Caco-2 (cell line): ENCODE measurements at regions of chr3 and their contacts with region 1.

Region 1: DNA sequence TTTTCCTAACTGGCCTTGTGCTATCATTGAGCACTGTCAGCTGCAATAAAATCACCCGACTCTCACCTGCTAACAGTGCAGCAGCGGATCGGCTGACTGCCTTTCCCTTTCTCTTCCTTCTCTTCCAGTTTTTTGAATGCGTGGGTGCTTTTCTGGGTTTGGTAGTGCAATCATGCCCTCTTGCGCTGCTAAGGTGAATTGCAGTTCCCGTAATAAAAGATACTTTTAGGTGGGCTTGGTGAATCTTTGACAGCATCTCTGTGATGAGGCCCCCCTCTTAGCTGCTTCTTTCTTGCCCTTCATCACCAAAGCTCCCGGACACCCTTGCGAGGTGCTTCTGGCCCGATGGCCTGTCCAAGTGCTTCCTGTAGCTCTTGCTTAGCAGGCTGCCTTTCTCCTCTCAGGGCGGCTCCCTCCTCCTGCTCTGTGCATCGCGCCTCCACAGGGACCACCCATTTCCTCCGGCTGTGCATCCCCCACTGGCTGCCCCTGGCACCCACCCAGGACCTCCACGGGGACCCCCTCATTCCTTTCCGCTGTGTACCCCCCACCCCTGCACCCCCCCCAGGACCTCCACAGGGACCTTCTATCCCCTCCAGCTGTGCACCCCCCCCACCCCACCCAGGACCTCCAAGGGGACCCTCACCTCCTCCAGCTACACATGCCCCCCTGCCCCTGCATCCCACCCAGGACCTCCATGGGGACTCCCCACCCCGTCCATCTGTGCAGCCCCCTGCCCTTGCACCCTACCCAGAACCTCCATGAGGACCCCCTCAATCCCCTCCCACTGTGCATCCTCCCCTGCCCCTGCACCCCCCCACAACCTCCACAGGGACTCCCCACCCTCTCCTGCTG is 50.8 kb upstream of the RPL32 start:
- DNase-seq: peak in 1 of 2 experiments; percentile 55
- H3K4me3 ChIP-seq: no peak overlapping the region
- H3K4me3 Mint-ChIP-seq: no peak overlapping the region
- H3K27ac Mint-ChIP-seq: no peak overlapping the region
- H3K4me1 ChIP-seq: peaks cover 14% of the 10 kb centered on the region
- H3K4me1 Mint-ChIP-seq: peaks cover 23% of the 10 kb centered on the region
- H3K27me3 ChIP-seq: no peaks in the 10 kb centered on the region
- H3K27me3 Mint-ChIP-seq: peaks cover 7% of the 10 kb centered on the region
- CTCF ChIP-seq: peak; percentile 82 to 85

Region 2: DNA sequence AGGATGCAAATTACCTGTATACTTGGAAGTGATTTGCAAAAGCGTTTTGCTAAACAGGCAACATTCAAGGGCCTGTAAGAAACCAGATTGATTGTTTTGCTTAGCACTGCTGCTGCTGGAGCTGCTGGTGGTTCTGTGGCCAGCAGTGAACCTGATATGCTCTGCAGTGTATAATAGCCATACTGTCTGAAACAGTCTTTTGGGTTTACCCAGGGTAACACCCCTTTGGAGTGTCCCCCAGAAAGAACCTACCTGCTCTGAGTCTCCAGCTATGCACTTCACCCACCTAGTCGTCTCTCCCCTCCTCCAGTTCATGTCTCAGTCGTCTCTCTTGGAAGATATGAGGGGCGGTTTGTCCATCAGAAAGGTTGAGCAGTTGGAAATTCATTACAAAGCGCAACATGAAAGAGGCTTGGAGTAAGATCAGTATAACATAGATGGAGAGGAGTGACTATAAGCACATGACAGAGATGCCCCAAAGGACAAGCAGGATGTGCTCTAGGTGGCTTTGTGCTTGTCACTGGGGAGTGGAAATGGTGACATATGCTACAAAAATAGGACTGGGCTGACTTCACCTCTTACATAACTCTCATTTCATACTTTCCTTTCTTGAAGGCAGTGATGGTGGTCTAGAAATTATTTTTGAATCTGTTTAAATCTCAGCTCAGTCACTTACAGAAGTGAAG is 331.6 kb before region 1 on chr3:
- CTCF ChIA-PET with region 1: no interaction called
- POLR2A ChIA-PET with region 1: no interaction called
- intact Hi-C with region 1: loop called (anchors 5 kb)
- DNase-seq: no peak
- H3K4me3 ChIP-seq: no peak overlapping the region
- H3K4me3 Mint-ChIP-seq: no peak overlapping the region
- H3K27ac Mint-ChIP-seq: no peak overlapping the region
- H3K4me1 ChIP-seq: peaks cover 24% of the 10 kb centered on the region
- H3K4me1 Mint-ChIP-seq: peaks cover 26% of the 10 kb centered on the region
- H3K27me3 ChIP-seq: no peaks in the 10 kb centered on the region
- H3K27me3 Mint-ChIP-seq: no peaks in the 10 kb centered on the region
- CTCF ChIP-seq: no peak

Region 3: DNA sequence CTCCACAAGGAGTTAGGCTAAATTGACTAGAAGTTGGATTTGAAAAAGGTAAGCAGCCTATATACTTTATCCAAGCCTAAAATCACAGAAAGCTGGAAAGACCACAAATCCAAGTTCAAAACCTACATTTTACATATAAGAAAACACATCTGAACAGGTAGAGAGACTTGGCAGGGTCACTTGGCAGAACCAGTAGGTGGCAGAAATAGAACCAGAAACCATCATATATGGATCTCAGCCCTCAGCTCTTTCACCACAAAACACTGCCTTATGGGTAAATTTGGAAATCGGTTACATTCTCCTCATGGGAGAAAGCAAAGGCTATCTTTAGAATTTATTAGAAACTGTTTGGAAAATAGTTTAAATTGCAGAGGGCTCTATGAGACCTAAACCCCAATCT is 291.1 kb before region 1 on chr3:
- CTCF ChIA-PET with region 1: no interaction called
- POLR2A ChIA-PET with region 1: no interaction called
- intact Hi-C with region 1: loop called (anchors 2 kb)
- DNase-seq: no peak
- H3K4me3 ChIP-seq: no peak overlapping the region
- H3K4me3 Mint-ChIP-seq: no peak overlapping the region
- H3K27ac Mint-ChIP-seq: no peak overlapping the region
- H3K4me1 ChIP-seq: no peaks in the 10 kb centered on the region
- H3K4me1 Mint-ChIP-seq: no peaks in the 10 kb centered on the region
- H3K27me3 ChIP-seq: no peaks in the 10 kb centered on the region
- H3K27me3 Mint-ChIP-seq: no peaks in the 10 kb centered on the region
- CTCF ChIP-seq: peak in 1 of 2 experiments; percentile 28

Region 4: DNA sequence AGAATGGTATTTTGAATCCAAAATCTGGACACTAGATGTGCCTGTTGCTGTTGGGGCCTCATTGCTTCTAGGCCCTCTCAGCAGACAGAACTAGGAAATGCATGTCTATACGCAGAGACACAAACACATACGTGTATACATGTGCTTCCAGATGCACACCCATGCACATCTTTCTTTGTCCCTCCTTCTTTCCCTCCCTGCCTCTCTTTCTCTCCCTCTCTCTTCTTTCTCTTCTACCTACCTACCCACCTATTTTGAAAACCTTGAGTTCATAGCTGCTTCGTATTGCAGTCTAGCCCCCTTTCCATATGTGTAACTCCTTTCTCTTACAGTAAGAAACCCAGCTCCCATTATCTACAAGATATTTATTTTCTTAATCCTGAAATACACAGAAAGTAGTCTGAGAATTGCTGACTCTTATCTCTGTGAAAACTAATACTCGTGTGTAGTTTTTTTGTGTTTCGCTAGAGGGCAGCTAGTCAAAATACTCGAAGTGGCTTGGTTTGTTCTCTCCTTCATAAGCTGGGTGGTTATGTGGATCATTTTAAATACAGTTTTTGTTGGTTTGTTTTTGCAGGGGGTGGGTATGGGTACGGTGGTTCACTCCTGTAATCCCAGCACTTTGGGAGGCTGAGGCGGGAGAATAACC is 69.4 kb before region 1 on chr3:
- CTCF ChIA-PET with region 1: interaction called, 3 read pairs
- POLR2A ChIA-PET with region 1: no interaction called
- intact Hi-C with region 1: loop called (anchors 1 kb)
- DNase-seq: no peak
- H3K4me3 ChIP-seq: no peak overlapping the region
- H3K4me3 Mint-ChIP-seq: no peak overlapping the region
- H3K27ac Mint-ChIP-seq: no peak overlapping the region
- H3K4me1 ChIP-seq: peaks cover 5% of the 10 kb centered on the region
- H3K4me1 Mint-ChIP-seq: peaks cover 7% of the 10 kb centered on the region
- H3K27me3 ChIP-seq: no peaks in the 10 kb centered on the region
- H3K27me3 Mint-ChIP-seq: no peaks in the 10 kb centered on the region
- CTCF ChIP-seq: peak; percentile 16 to 50

Region 5: GRCh38 chr3:12868039-12869034 is 23.9 kb before region 1 on chr3:
- CTCF ChIA-PET with region 1: interaction called, 13 read pairs
- POLR2A ChIA-PET with region 1: no interaction called
- intact Hi-C with region 1: loop called (anchors 1 kb)
- DNase-seq: peak; percentile 84 to 85
- H3K4me3 ChIP-seq: no peak overlapping the region
- H3K4me3 Mint-ChIP-seq: peak overlapping the region; percentile 51
- H3K27ac Mint-ChIP-seq: no peak overlapping the region
- H3K4me1 ChIP-seq: peaks cover 5% of the 10 kb centered on the region; the same call in 1 of the 2 replicates
- H3K4me1 Mint-ChIP-seq: peaks cover 8% of the 10 kb centered on the region
- H3K27me3 ChIP-seq: no peaks in the 10 kb centered on the region
- H3K27me3 Mint-ChIP-seq: no peaks in the 10 kb centered on the region
- CTCF ChIP-seq: peak; percentile 83 to 95